ENCODE measurements at regions of chr2 and their contacts with region 1.

Region 1: DNA sequence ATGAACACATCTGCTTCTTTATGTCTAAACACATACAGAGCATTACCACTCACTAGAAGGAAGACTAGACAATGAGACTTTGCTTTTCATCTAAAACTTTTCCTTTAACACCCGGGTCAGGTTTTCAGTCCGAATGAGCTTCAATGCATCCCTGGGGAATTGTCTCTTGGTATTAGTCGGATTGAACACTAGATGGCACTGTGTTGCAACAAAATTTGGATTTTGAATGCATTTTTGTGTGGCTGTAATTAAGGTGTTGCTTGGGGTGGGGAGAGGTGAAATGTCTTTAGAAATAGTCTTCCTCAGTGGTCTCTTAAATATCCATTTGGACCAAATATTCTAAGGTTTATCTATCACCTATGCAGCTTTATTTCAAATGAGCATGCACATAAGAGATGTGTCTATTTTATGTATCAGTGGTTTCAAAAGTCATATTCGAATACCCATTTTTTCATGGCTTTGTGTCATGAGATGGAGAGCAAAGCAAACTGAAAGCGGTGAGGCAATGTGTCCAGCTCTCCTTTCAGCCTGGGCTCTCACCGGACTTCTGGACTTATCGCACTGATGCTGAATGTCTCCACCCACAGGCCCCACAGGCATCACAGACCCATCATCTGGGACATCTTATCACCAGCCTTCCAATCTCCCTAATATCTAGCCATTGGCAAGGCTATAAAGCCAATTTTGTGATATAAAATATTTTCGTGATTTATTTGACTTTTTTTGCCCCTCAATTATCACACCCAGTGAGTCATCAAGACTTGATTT is 510.3 kb downstream of the RNF144A start:
- DNase-seq: peak in 4 of 5 donors; percentile 57 to 69 (median 64)
- H3K4me3 ChIP-seq: no peak overlapping the region
- H3K4me3 Mint-ChIP-seq: peak overlapping the region in 4 of 8 donors; percentile 4 to 49 (median 30)
- H3K27ac ChIP-seq: no peak overlapping the region
- H3K27ac Mint-ChIP-seq: peak overlapping the region in 5 of 7 donors; percentile 8 to 52 (median 16)
- H3K4me1 ChIP-seq: peaks cover 9% of the 10 kb centered on the region
- H3K4me1 Mint-ChIP-seq: peaks cover 19 to 46% (median 32%) of the 10 kb centered on the region in 4 donors
- H3K27me3 ChIP-seq: no peaks in the 10 kb centered on the region
- H3K27me3 Mint-ChIP-seq: peaks cover 1 to 2% of the 10 kb centered on the region in 2 donors

Region 2: DNA sequence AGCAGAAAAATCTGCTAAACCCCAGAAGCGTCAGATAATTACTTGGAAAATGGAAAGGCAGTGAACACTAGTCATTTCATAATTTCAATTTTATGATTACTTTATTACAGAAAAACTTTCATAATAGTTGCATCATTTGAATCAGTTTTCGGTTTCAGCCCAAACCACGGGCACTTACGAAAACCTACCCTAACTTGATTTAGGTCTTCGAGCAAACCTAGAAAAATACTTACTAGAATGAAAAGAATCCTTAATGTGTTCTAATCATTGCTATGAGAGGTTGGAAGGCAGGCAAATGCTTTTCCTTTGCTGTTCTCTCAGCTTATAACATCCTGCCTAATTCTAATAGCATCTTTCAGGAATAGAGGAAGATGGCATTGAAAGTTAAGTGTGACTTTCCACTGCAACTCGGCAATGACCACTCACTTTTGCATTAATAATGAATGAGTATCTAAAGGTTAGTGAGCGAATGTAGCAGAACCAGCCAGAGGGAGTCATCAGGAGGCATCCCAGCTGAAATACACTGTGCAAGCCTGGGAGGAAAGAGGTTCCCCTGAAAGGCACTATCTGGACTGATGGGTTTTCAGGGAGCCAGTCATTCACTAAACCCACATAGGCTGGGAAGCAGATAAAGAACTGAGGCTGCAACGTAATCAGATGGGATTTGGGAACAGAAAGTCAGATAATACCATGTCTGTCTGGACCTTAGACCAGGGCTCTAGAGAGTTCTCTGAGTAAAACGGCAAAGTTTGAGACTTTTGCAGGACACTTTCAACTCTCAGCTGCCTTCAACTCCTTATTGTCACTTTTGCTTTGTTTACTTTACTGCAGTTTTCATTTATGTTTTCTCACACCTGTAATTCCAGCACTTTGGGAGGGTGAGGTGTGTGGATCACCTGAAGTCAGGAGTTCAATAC is 10.5 kb after region 1 on chr2:
- CTCF ChIA-PET with region 1: interaction called, 15 read pairs
- POLR2A ChIA-PET with region 1: interaction called, 3 read pairs
- intact Hi-C with region 1: no loop called
- DNase-seq: no peak
- H3K4me3 ChIP-seq: no peak overlapping the region
- H3K4me3 Mint-ChIP-seq: peak overlapping the region in 7 of 8 donors; percentile 11 to 62 (median 21)
- H3K27ac ChIP-seq: no peak overlapping the region
- H3K27ac Mint-ChIP-seq: peak overlapping the region in 6 of 7 donors; percentile 23 to 79 (median 42)
- H3K4me1 ChIP-seq: peaks cover 30% of the 10 kb centered on the region
- H3K4me1 Mint-ChIP-seq: peaks cover 16 to 42% (median 31%) of the 10 kb centered on the region in 4 donors
- H3K27me3 ChIP-seq: no peaks in the 10 kb centered on the region
- H3K27me3 Mint-ChIP-seq: no peaks in the 10 kb centered on the region

Region 3: GRCh38 chr2:7567646-7568045 is 140.2 kb after region 1 on chr2:
- CTCF ChIA-PET with region 1: interaction called, 8 read pairs
- POLR2A ChIA-PET with region 1: interaction called, 12 read pairs
- intact Hi-C with region 1: loop called (anchors 1 kb)
- DNase-seq: peak in 4 of 5 donors; percentile 59 to 64 (median 60)
- H3K4me3 ChIP-seq: no peak overlapping the region
- H3K4me3 Mint-ChIP-seq: peak overlapping the region; percentile 3 to 78 (median 56)
- H3K27ac ChIP-seq: peak overlapping the region; percentile 16
- H3K27ac Mint-ChIP-seq: peak overlapping the region; percentile 48 to 93 (median 89)
- H3K4me1 ChIP-seq: peaks cover 40% of the 10 kb centered on the region
- H3K4me1 Mint-ChIP-seq: peaks cover 27 to 57% (median 46%) of the 10 kb centered on the region in 4 donors
- H3K27me3 ChIP-seq: no peaks in the 10 kb centered on the region
- H3K27me3 Mint-ChIP-seq: no peaks in the 10 kb centered on the region

Region 4: DNA sequence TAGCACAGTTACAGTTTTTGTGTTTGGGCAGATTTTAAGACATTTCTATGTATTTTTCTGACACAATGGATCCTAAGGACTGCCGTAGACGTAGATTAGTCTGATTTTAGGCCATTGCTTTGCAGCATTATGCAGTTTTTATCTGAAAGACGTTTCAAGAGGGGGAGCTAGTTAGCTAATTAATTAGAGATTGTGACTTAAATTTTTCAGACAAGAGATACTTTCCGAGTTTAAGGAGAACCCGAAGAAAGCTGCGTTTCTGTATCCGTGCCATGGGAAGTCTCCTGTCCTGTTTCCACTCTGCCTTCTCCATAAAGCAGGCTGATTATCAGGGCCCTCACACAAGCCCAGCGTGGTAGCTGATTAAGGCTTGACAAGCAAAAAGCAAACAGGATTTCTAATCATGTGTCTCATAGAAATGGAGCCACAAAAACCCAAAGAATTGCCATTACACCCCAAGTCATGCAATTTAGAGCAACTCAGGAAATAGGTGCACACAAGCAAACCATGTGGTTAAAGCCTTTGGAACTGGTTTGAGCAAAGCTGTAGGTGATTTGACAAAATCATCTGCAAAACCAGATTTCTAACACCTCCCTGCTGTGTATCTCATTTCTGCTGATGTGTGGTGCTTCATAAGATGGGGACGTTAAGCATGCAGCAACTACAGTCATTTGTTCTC is 297.8 kb after region 1 on chr2:
- CTCF ChIA-PET with region 1: interaction called, 28 read pairs
- POLR2A ChIA-PET with region 1: interaction called, 19 read pairs
- intact Hi-C with region 1: loop called (anchors 1 kb)
- DNase-seq: peak; percentile 65 to 74 (median 69)
- H3K4me3 ChIP-seq: peak overlapping the region in 1 of 2 donors; percentile 13
- H3K4me3 Mint-ChIP-seq: peak overlapping the region; percentile 53 to 92 (median 80)
- H3K27ac ChIP-seq: peak overlapping the region; percentile 26
- H3K27ac Mint-ChIP-seq: peak overlapping the region; percentile 68 to 97 (median 88)
- H3K4me1 ChIP-seq: peaks cover 40% of the 10 kb centered on the region
- H3K4me1 Mint-ChIP-seq: peaks cover 29 to 77% (median 54%) of the 10 kb centered on the region in 4 donors
- H3K27me3 ChIP-seq: no peaks in the 10 kb centered on the region
- H3K27me3 Mint-ChIP-seq: no peaks in the 10 kb centered on the region

Region 5: DNA sequence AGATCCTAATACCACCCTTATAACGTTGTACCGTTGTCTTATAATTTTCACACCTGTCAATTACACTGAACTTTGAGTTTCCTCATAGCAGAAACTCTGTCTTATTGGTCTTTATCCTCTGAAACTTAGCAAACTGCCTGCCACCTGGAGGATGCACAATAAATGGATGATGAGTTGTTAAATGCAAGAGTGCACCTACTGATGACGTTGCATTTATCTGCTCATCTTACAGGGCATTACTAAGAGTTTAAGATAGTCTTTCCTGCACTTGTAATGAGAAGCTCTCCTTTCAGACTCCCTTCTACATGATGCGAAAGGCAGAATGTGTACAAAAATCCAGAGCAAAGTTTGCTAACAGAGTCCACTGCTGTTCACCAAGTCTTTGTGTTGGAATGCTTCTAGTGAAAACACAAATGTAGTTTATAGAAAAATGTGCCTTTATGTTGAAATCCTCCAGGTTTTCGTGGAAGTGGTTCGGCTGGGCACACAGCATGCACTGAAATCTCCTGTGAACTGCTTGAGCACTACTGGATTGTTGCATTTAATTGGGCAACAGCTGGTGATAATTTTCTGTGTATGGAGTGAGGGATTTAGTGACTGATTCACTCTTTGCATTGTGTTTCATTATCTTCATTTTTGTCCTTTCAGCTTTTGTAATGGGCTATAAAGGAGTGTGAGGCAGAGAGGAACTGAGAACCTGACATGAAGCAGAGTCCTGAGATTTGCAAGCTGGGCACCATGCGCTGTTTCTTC is 588.5 kb after region 1 on chr2:
- CTCF ChIA-PET with region 1: no interaction called
- POLR2A ChIA-PET with region 1: no interaction called
- intact Hi-C with region 1: loop called (anchors 10 kb)
- DNase-seq: no peak
- H3K4me3 ChIP-seq: no peak overlapping the region
- H3K4me3 Mint-ChIP-seq: no peak overlapping the region
- H3K27ac ChIP-seq: no peak overlapping the region
- H3K27ac Mint-ChIP-seq: no peak overlapping the region
- H3K4me1 ChIP-seq: no peaks in the 10 kb centered on the region
- H3K4me1 Mint-ChIP-seq: no peaks in the 10 kb centered on the region
- H3K27me3 ChIP-seq: no peaks in the 10 kb centered on the region
- H3K27me3 Mint-ChIP-seq: no peaks in the 10 kb centered on the region